Prostate gland (tissue), 2 donors: ENCODE measurements at regions of chr3 and their contacts with region 1.

Region 1: GRCh38 chr3:40971191-40972168 is 227.8 kb upstream of the CTNNB1 start:
- DNase-seq: peak; percentile 30
- H3K4me3 ChIP-seq: no peak overlapping the region
- H3K27ac ChIP-seq: peak overlapping the region in 1 of 2 donors; percentile 39
- H3K4me1 ChIP-seq: no peaks in the 10 kb centered on the region
- H3K27me3 ChIP-seq: no peaks in the 10 kb centered on the region
- CTCF ChIP-seq: no peak
- POLR2A ChIP-seq: no peak

Region 2: DNA sequence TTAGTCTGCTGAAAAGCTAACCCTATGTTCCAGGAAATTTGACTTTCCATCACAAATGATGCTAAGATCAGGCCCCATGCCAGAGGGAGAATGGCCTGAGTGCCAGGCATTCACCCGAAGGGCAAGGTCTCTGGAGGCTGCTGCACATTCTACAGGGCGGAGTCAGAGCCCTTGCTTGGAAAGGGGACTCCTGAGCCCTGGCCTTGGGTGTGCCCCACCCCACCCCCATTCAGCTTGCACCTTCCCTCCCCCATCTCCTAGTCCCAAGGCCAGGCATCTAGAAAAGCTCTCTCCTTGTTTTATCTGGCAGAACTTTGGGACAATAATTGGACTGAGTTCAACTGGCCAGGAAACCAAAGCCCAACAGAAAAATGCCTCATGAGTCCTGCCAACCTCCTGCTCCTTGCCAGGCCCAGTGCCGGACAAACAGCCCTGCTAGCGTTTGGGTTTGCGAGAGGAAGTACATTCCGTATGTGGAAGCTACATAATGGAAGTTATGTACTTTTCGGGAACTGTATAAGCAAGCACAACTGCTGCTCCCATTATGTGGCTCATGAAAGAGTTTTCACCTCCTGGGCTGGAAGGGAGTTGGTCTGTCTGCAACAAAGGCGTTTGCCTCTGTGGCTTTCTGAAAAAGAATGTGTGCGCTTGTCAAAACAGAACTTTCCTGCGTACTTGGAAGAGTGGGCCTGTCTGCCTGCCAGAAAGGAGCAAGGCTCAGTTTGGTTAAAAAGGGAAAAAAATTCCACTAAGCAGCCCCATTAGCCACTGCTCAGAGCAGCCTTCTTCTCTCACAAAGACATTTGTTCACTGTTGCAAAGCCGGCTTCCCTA is 93.6 kb before region 1 on chr3:
- intact Hi-C with region 1: loop called (anchors 5 kb)
- DNase-seq: peak; percentile 86
- H3K4me3 ChIP-seq: no peak overlapping the region
- H3K27ac ChIP-seq: peak overlapping the region; percentile 32 to 74
- H3K4me1 ChIP-seq: peaks cover 20% of the 10 kb centered on the region
- H3K27me3 ChIP-seq: no peaks in the 10 kb centered on the region
- CTCF ChIP-seq: no peak
- POLR2A ChIP-seq: no peak

Region 3: GRCh38 chr3:41088882-41089281 is 117.4 kb after region 1 on chr3:
- intact Hi-C with region 1: no loop called
- DNase-seq: no peak
- H3K4me3 ChIP-seq: no peak overlapping the region
- H3K27ac ChIP-seq: no peak overlapping the region
- H3K4me1 ChIP-seq: no peaks in the 10 kb centered on the region
- H3K27me3 ChIP-seq: no peaks in the 10 kb centered on the region
- CTCF ChIP-seq: no peak
- POLR2A ChIP-seq: no peak